Heart left ventricle (tissue), 16 donors: ENCODE measurements at regions of chr16 and their contacts with region 1.

Region 1: GRCh38 chr16:24504472-24505345 is 34.7 kb upstream of the RBBP6 start:
- DNase-seq: peak in 4 of 5 donors; percentile 31 to 42 (median 38)
- ATAC-seq: peak; percentile 42 to 90 (median 82)
- H3K4me3 ChIP-seq: no peak overlapping the region
- H3K27ac ChIP-seq: no peak overlapping the region
- H3K4me1 ChIP-seq: no peaks in the 10 kb centered on the region
- H3K27me3 ChIP-seq: peaks cover 0 to 29% (median 6%) of the 10 kb centered on the region in 9 donors
- CTCF ChIP-seq: peak; percentile 65 to 82 (median 75)
- POLR2A ChIP-seq: no peak

Region 2: GRCh38 chr16:23795378-23795777 is 709.3 kb before region 1 on chr16:
- intact Hi-C with region 1: loop called in 5 of 10 experiments (anchors 5 to 10 kb)
- DNase-seq: no peak
- ATAC-seq: no peak
- H3K4me3 ChIP-seq: no peak overlapping the region
- H3K27ac ChIP-seq: no peak overlapping the region
- H3K4me1 ChIP-seq: no peaks in the 10 kb centered on the region
- H3K27me3 ChIP-seq: peaks cover 0 to 21% (median 0%) of the 10 kb centered on the region in 9 donors
- CTCF ChIP-seq: no peak
- POLR2A ChIP-seq: no peak

Region 3: DNA sequence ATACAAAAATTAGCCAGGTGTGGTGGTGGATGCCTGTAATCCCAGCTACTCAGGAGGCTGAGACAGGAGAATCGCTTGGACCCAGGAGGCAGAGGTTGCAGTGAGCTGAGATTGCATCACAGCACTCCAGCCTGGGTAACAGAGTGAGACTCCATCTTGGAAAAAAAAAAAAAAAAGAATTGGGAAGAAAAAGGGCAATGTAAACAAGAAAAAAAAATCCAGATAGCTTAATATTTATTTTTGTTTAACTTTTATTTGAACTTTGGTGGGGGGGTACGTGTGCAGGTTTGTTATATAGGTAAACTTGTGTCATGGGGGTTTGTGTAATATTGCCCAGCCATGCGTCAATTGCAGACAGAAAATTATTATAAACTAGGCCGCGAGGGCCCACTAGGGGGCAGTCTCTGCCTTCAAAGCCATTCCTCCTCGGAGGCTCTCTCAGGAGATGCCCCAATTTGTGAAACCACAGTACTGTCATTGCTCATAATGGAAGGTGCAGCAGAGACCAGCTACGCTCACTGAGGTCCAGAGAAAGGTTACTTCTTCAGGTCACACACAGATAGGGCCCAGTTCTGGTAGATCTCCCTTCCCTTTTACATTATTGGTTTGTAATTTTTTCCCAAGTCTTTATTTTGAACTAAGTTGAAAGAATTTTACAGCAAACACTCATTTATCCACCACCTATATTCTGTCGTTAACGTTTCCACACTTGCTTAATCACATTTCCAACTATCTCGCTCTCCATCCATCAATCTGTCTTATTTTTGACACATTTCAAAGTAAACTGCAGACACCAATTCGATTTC is 462.7 kb before region 1 on chr16:
- intact Hi-C with region 1: loop called (anchors 1 to 5 kb)
- DNase-seq: peak; percentile 18 to 71 (median 46)
- ATAC-seq: peak in 3 of 4 donors; percentile 59 to 62 (median 59)
- H3K4me3 ChIP-seq: no peak overlapping the region
- H3K27ac ChIP-seq: no peak overlapping the region
- H3K4me1 ChIP-seq: no peaks in the 10 kb centered on the region
- H3K27me3 ChIP-seq: peaks cover 0 to 22% (median 0%) of the 10 kb centered on the region in 9 donors
- CTCF ChIP-seq: peak; percentile 50 to 77 (median 70)
- POLR2A ChIP-seq: no peak

Region 4: GRCh38 chr16:24062270-24062817 is 442.4 kb before region 1 on chr16:
- intact Hi-C with region 1: loop called in 2 of 10 experiments (anchors 5 kb)
- DNase-seq: no peak
- ATAC-seq: no peak
- H3K4me3 ChIP-seq: no peak overlapping the region
- H3K27ac ChIP-seq: no peak overlapping the region
- H3K4me1 ChIP-seq: no peaks in the 10 kb centered on the region
- H3K27me3 ChIP-seq: peaks cover 0 to 14% (median 0%) of the 10 kb centered on the region in 9 donors
- CTCF ChIP-seq: no peak
- POLR2A ChIP-seq: no peak

Region 5: GRCh38 chr16:24253192-24253591 is 251.5 kb before region 1 on chr16:
- intact Hi-C with region 1: loop called in 5 of 10 experiments (anchors 5 to 10 kb)
- DNase-seq: peak in 1 of 5 donors; percentile 19
- ATAC-seq: peak in 3 of 4 donors; percentile 55 to 63 (median 62)
- H3K4me3 ChIP-seq: no peak overlapping the region
- H3K27ac ChIP-seq: no peak overlapping the region
- H3K4me1 ChIP-seq: no peaks in the 10 kb centered on the region
- H3K27me3 ChIP-seq: peaks cover 2 to 48% (median 40%) of the 10 kb centered on the region in 9 donors
- CTCF ChIP-seq: peak; percentile 49 to 71 (median 66)
- POLR2A ChIP-seq: no peak

Region 6: GRCh38 chr16:24367186-24367710 is 137.5 kb before region 1 on chr16:
- intact Hi-C with region 1: no loop called
- DNase-seq: no peak
- ATAC-seq: no peak
- H3K4me3 ChIP-seq: no peak overlapping the region
- H3K27ac ChIP-seq: no peak overlapping the region
- H3K4me1 ChIP-seq: no peaks in the 10 kb centered on the region
- H3K27me3 ChIP-seq: peaks cover 0 to 4% (median 0%) of the 10 kb centered on the region in 9 donors
- CTCF ChIP-seq: no peak
- POLR2A ChIP-seq: no peak

Region 7: DNA sequence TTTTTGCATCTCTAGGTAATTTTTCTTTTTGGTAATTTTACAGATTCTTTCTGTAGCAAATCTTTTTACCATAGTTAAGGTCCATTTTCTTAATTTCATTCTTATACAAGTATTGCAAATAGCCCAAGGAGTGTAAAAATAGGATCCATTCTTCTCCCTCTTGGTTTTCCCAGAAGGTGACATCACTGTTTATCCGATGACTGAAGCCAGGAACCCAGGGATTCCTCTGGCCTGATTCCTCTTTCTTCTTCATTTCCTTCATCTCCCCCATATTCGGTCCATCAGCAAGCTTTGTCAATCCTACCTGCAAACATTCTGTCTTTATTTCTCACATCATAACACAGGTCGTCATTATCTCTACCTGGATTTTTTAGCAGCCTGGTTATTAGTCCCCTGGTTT is 39.9 kb after region 1 on chr16:
- intact Hi-C with region 1: no loop called
- DNase-seq: no peak
- ATAC-seq: no peak
- H3K4me3 ChIP-seq: peak overlapping the region in 5 of 12 donors; percentile 0 to 99 (median 96)
- H3K27ac ChIP-seq: peak overlapping the region in 7 of 12 donors; percentile 22 to 69 (median 39)
- H3K4me1 ChIP-seq: peaks cover 3 to 55% (median 43%) of the 10 kb centered on the region in 12 donors
- H3K27me3 ChIP-seq: no peaks in the 10 kb centered on the region
- CTCF ChIP-seq: no peak
- POLR2A ChIP-seq: no peak

Region 8: GRCh38 chr16:24800586-24800985 is 295.9 kb after region 1 on chr16:
- intact Hi-C with region 1: no loop called
- DNase-seq: no peak
- ATAC-seq: peak; percentile 21 to 60 (median 56)
- H3K4me3 ChIP-seq: no peak overlapping the region
- H3K27ac ChIP-seq: no peak overlapping the region
- H3K4me1 ChIP-seq: no peaks in the 10 kb centered on the region
- H3K27me3 ChIP-seq: no peaks in the 10 kb centered on the region
- CTCF ChIP-seq: peak in 7 of 12 donors; percentile 6 to 44 (median 25)
- POLR2A ChIP-seq: no peak

Region 9: GRCh38 chr16:24820522-24820921 is 315.8 kb after region 1 on chr16:
- intact Hi-C with region 1: no loop called
- DNase-seq: no peak
- ATAC-seq: no peak
- H3K4me3 ChIP-seq: no peak overlapping the region
- H3K27ac ChIP-seq: no peak overlapping the region
- H3K4me1 ChIP-seq: peaks cover 0 to 4% (median 0%) of the 10 kb centered on the region in 12 donors
- H3K27me3 ChIP-seq: no peaks in the 10 kb centered on the region
- CTCF ChIP-seq: no peak
- POLR2A ChIP-seq: no peak